ENCODE measurements at regions of chr3 and their contacts with region 1.

Region 1: GRCh38 chr3:124078953-124079911 is 87.3 kb upstream of the ROPN1 start:
- DNase-seq: no peak
- CTCF ChIP-seq: peak; percentile 68

Region 2: DNA sequence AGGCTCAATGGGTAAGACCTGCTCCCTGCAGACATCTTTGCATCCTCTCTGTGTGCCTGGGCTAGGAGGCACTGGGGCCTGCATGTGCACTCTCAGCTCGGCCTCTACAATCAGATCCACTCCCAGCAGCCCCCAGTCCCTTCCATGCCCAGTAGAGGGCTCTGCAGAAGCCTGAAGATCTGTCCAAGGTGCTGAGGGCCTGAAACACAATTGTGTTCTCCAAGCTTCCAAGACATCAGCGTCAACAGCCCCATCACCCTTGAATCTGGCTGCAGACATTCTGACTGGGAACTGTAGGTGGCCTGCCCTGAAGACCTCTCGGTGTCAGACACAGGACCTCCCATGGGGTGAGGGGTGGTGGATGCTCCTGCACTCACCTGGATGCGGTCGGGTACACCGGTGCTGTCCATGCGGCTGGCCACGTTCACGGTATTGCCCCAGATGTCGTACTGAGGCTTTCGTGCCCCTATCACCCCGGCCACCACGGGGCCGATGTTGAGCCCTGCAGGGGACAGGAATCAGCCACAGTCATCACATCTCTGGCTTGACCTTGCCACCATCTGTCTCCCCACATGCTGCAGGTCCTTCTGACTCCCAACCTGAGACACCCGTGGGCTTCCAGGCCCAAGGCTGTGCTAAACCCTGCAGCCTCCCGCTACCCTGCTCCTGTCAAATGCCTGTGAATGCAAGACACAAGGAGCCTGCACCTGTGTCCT is 792.8 kb before region 1 on chr3:
- CTCF ChIA-PET with region 1: no interaction called
- POLR2A ChIA-PET with region 1: no interaction called
- DNase-seq: peak; percentile 83
- CTCF ChIP-seq: peak; percentile 76

Region 3: GRCh38 chr3:123688241-123688747 is 390.9 kb before region 1 on chr3:
- CTCF ChIA-PET with region 1: no interaction called
- POLR2A ChIA-PET with region 1: no interaction called
- DNase-seq: no peak
- CTCF ChIP-seq: no peak

Region 4: GRCh38 chr3:124014366-124014942 is 64.8 kb before region 1 on chr3:
- CTCF ChIA-PET with region 1: interaction called, 16 read pairs
- POLR2A ChIA-PET with region 1: no interaction called
- DNase-seq: no peak
- CTCF ChIP-seq: no peak

Region 5: GRCh38 chr3:124097362-124098131 is 18.3 kb after region 1 on chr3:
- CTCF ChIA-PET with region 1: interaction called, 15 read pairs
- POLR2A ChIA-PET with region 1: no interaction called
- DNase-seq: no peak
- CTCF ChIP-seq: no peak

Measured in GM10248 (cell line).